Left colon (tissue), 2 donors: ENCODE measurements at regions of chr6 and their contacts with region 1.

Region 1: GRCh38 chr6:111605100-111605751 is 452 bp downstream of the TRAF3IP2 start:
- DNase-seq: peak; percentile 53 to 57
- ATAC-seq: peak; percentile 28

Region 2: DNA sequence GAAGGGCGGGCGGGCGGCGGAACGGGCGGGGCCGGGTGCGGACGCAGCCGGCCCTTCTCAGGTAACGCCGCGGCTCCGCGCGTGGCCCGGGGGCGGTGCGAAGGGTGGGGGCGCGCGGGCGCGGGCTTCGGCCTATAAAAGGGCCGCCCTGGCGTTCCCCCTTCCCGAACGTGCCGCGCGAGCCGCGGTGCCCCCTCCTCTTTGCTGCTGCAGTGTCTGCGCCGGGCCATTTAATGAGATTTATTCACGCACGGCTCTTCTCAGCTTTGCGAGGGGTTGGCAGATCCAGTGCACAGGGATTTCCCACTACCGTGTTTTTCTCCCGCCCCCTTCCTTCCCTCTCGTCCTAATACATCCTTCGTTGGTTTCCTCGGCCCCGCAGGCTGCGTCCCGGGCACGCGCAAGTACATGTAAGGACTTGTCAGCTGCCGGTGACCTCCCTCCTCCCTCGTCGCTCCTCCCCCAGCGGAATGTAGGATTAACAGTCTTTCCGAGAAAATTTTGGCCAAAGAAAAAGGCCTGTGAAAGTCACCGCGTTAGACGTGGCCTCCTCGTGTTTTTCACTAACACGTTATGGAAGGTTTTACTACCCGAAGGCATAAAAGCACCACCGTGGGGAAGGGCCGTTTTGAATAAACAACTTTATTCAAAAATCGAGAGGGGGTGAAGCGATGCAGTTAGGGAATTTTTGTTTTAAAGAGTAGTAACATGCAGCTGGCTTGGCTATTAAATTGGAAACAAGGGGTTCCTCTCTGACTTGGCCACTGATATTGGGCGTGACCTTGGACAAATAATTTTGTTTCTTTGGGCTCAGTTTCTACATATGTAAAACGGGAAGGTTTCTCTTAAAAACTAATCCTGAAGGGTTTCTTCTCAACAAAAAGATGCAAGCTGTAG is 121.2 kb before region 1 on chr6:
- intact Hi-C with region 1: loop called in 1 of 2 experiments (anchors 10 kb)
- DNase-seq: peak; percentile 92 to 96
- ATAC-seq: peak; percentile 84

Region 3: DNA sequence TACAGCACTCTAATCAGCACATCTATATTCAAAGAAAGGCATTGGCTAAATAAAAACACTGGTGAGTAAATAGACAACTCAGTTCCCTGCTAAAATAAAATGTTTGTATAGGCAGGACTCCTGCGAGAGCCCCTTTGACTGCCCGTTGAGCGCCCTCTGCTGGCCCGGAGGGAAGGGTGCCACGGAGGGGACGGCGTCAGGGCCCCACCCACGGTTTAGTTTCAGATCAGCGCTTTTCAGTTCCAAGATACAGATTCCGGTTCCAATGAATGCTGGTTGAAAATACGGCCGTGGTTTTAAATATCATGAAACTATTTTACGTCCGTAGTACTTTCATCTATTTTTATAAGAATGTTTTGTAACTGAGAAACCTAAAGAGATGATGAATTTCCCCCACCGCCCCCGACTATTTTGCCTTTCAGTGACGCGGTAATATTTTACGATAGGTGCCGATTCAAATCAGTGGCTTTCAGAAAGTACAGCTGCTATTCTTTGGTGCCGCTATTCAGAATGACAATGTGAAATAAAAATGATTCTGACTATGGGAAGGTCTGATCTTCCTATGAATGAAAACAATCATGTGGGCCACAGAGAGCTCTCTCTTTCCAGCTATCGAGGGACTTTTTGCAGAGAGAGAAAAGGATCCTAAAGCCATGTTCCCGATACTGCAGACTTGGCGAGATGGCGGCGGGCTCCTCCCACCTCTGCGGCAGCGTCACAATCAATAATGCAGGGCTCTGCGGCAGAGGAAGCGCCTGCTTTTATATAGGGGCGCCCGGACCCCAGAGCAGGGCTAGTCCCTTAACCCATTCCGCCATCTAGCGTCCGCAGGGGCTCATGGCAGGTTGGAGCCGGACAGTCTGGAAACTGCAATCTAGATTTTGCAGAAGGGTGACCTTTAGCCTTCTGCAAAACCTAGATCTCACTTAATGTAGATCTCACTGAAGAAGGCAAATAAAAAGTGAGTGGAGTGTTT is 438.1 kb after region 1 on chr6:
- intact Hi-C with region 1: no loop called
- DNase-seq: peak; percentile 83 to 91
- ATAC-seq: peak; percentile 95

Region 4: GRCh38 chr6:112416866-112417265 is 811.6 kb after region 1 on chr6:
- intact Hi-C with region 1: no loop called
- DNase-seq: no peak
- ATAC-seq: no peak